Ovary (tissue), 10 donors: ENCODE measurements at regions of chr4 and their contacts with region 1.

Region 1: DNA sequence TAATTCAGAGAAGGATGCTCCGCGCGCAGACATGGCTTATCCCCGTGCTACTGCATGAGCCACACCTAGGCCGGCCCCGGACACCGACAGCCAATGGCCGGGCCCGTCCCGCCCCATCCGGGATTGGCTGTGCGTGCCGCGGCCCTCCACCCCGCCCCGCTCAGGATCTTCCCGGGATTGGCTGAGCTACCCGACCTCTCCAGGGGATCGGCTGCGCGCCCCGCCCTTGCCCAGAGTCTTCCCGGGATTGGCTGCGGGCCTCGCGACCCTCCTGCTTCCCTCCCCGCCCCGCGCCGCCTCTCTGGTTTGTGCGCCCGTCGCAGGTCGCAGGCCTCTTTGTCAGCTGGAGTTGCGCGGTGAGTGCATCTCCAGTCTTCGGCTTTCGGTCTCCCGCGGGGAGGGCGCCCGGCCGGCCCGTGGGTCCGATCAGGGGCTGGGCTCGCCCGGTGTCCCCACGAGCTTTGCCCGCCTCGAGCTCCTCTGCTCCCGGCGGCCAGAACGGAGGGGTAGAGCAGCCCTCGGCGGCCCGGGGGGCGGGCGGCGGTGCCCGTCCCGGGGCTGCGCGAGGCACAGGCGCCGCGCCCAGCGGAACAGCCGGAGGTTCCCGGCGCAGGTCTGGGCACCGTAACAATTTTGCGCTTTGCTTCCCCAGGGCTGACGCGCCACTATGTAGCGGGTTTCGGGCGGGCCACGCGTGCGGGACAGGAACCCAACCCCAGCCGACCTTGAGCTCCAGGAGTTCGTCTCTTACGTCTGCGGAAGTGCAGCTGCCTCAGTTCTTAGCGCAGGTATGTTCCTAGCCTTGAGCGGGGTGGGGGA is 38.8 kb downstream of the ERVMER34-1 start:
- DNase-seq: peak; percentile 98 to 99 (median 98)
- H3K4me3 ChIP-seq: peak overlapping the region; percentile 95
- H3K27ac ChIP-seq: peak overlapping the region; percentile 82 to 91
- H3K4me1 ChIP-seq: peaks cover 11% of the 10 kb centered on the region
- H3K27me3 ChIP-seq: no peaks in the 10 kb centered on the region
- CTCF ChIP-seq: no peak
- EP300 ChIP-seq: no peak
- POLR2A ChIP-seq: peak; percentile 84

Region 2: DNA sequence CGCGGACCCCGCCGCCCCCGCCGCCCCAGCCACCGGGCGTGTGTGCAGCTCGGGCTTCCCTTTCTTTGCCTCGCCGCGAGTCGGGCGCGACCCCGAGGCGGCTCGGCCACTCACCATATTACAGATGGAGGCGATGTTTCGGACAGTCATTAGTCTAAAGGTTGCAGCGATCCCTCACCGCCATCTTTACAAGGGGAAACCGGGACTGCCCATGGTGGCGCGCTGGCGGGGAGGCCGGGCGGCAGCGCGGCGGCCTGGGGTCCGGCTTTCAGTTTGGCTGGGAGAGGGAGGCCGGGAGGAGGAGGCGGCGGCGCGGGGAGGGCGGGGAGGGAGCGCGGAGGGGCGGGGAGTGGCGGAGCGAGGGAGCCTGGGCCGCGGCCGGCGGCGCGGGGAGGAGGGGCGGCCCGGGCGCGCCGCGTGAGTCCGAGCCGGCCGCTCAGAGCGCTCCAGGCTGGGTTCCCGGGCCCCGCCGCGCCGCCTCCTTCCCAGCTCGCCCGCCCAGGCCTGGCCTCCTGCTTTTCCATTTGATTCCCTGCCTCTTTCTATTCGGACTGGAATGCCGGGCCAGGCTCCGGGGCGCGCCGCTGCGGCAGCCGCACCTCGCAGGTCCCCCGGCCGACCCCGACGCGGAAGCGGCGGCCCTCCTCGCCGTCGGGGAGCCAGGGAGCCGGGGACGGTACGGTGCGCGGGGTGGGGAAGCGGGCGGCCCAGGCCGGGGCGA is 53.2 kb before region 1 on chr4 and contains the start of gene USP46:
- intact Hi-C with region 1: loop called in 1 of 4 experiments (anchors 5 kb)
- DNase-seq: peak; percentile 73 to 84 (median 82)
- H3K4me3 ChIP-seq: peak within 1 kb of the TSS; percentile 83
- H3K27ac ChIP-seq: peak within 1 kb of the TSS; percentile 86 to 92
- H3K4me1 ChIP-seq: peaks cover 11% of the 10 kb centered on the region
- H3K27me3 ChIP-seq: no peaks in the 10 kb centered on the region
- CTCF ChIP-seq: no peak
- EP300 ChIP-seq: no peak
- POLR2A ChIP-seq: peak; percentile 40
- total RNA-seq, gene USP46: 10.3 to 51.6 (median 34.9) TPM

Region 3: DNA sequence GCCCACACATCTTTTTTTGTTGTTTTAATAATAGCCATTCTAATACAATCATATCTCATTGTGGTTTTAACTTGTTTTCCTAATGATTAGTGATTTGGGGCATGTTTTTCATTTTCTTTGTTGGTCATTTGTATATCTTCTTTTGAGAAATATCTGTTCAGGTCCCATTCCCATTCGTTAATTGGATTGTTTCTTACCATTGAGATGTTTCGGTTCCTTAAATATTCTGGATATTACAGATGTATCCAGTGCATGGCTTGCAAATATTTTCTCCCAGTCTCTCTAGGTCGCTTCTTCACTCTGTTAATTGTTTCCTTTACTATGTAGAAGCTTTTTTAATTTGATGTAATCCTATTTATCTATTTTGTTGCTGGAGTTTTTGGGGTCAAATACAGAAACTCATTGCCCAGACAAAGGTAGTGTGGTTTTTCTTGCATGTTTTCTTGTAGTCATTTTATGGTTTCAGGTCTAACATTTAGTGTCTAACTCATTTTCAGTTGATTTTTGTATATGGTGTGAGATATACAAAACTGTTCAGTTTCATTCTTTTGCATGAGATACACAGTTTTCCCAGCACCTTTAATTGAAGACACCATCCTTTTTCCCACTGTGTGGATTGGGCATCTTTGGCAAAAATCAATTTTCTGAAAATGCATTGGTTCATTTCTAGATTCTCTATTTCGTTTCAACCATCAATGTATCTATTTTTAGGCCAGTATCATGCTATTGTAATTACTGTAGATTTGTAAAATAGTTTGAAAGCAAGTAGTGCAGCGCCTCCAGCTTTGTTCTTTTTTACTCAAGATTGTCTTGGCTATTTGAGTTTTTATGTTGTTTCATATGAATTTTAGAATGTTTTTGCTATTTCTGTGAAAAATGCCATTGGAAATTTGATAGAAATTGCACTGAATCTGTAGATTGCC is 457.6 kb after region 1 on chr4:
- intact Hi-C with region 1: no loop called
- DNase-seq: no peak
- H3K4me3 ChIP-seq: no peak overlapping the region
- H3K27ac ChIP-seq: no peak overlapping the region
- H3K4me1 ChIP-seq: no peaks in the 10 kb centered on the region
- H3K27me3 ChIP-seq: no peaks in the 10 kb centered on the region
- CTCF ChIP-seq: no peak
- EP300 ChIP-seq: no peak
- POLR2A ChIP-seq: no peak